ENCODE measurements at regions of chr20 and their contacts with region 1.

Region 1: DNA sequence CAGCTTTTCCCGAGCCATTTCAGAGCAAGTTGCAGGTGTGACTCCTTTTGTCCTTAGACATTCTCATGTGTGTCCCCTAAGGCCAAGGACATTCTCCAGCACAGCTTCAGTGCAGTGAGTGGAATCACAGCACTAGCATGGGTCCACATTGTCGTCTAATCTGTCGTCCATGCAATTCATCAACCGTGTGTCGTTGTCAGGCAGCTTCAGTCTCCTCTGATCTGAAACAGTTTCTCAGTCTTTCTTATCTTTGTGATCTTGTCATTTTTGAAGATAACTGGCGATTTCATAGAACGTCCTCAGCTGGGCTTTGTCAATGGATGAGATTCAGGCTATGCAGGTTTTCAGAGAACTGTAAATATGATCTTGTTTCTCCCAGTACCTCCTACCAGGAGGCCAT is 31.7 kb downstream of the CST2 start:
- DNase-seq: no peak
- H3K4me3 ChIP-seq: no peak overlapping the region
- H3K27ac ChIP-seq: no peak overlapping the region
- H3K4me1 ChIP-seq: no peaks in the 10 kb centered on the region
- H3K27me3 ChIP-seq: peaks cover 6% of the 10 kb centered on the region
- CTCF ChIP-seq: no peak

Region 2: DNA sequence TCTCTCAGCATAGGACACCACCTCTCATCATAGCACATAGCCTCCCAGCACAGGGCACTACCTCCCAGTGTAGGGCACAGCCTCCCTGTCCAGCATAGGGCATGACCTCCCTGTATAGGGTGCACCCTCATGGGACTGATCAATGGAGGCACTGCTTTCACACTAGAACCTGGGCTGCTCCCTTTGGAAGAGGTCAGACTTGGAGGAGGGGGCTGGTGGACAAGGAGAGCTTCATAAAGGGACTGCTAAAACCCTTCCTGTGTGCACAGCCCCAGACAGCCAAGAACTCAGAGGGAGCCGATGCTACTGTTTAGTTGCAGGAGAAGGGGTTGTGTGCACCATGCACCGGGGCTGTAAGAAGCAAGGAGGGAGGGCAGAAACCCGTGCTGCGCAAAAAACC is 84.1 kb before region 1 on chr20:
- CTCF ChIA-PET with region 1: no interaction called
- dilution Hi-C with region 1: loop called (anchors 5 kb)
- in situ Hi-C with region 1: no loop called
- intact Hi-C with region 1: no loop called
- DNase-seq: no peak
- H3K4me3 ChIP-seq: no peak overlapping the region
- H3K27ac ChIP-seq: no peak overlapping the region
- H3K4me1 ChIP-seq: peaks cover 3% of the 10 kb centered on the region
- H3K27me3 ChIP-seq: no peaks in the 10 kb centered on the region
- CTCF ChIP-seq: no peak

Measured in mammary epithelial cell (primary cell).